HEK293T (cell line): ENCODE measurements at regions of chrX and their contacts with region 1.

Region 1: GRCh38 chrX:47129157-47129898 is 15.2 kb downstream of the NDUFB11 start:
- DNase-seq: peak; percentile 90

Region 2: DNA sequence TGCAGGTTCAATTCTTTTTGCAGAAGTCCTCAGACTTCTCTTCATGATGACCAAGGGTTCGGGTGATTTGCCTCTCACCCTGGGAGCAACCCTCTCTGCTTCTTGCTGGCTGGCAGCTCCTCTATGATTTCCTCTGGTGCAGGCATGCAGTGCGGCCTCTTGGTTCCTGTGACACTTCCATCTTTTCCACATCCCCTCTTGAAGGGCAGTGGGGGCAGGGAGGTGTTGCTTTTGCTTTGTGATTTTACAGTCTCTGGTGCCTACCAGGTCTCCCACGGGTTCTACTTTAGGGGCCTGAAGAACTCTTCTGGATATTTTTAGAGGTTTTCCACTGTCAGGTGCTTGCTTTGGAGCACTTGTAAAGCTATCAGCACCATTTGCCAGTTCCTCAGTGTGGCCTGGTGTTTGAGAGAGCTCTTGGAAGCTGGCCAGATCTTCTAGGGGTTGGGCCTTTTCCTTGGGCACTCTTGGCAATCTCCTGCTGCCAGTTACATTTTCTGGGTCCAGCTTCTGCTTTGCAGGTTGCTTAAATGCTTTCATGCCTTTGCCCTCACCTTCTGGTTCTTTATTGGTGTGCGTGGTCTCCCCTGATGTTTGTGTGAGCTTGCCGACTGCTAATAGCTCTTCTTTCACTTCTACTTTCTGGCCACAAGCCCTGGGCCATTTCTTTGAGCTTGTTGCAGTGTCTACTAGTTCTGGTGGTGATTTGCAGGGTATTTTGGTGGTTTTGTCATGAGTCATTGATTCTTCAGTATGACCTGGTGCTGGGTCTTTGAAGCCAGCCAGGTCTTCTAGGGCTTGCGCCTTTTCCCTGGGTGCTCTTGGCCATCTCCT is 567.3 kb before region 1 on chrX:
- CTCF ChIA-PET with region 1: no interaction called
- POLR2A ChIA-PET with region 1: no interaction called
- DNase-seq: no peak

Region 3: GRCh38 chrX:47144626-47145394 is 15.5 kb after region 1 on chrX and contains the starts of genes NDUFB11 and RBM10:
- CTCF ChIA-PET with region 1: interaction called, 4 read pairs
- POLR2A ChIA-PET with region 1: interaction called, 76 read pairs
- DNase-seq: peak; percentile 85

Region 4: GRCh38 chrX:47247206-47247998 is 118.1 kb after region 1 on chrX:
- CTCF ChIA-PET with region 1: no interaction called
- POLR2A ChIA-PET with region 1: no interaction called
- DNase-seq: no peak